ENCODE measurements at regions of chr22 and their contacts with region 1.

Region 1: GRCh38 chr22:35627264-35628041 is 10.3 kb upstream of the MB start:
- DNase-seq: peak; percentile 64
- ATAC-seq: peak; percentile 78
- H3K4me3 ChIP-seq: peak overlapping the region; percentile 59 to 79 (median 59)
- H3K27ac ChIP-seq: no peak overlapping the region
- H3K4me1 ChIP-seq: peaks cover 23% of the 10 kb centered on the region
- H3K27me3 ChIP-seq: 0 out of 5 replicates have a peak, but pooled peaks cover 0 to 3% of the 10 kb centered on the region in 2 experiments
- CTCF ChIP-seq: peak; percentile 89
- EP300 ChIP-seq: no peak
- POLR2A ChIP-seq: peak in 1 of 2 experiments; percentile 47; a peak in 1 of 4 replicates
- RAD21 ChIP-seq: peak; percentile 74

Region 2: GRCh38 chr22:35350539-35351503 is 276.6 kb before region 1 on chr22:
- CTCF ChIA-PET with region 1: interaction called, 7 read pairs
- POLR2A ChIA-PET with region 1: no interaction called
- in situ Hi-C with region 1: no loop called
- intact Hi-C with region 1: loop called (anchors 1 kb)
- DNase-seq: peak; percentile 79
- ATAC-seq: peak; percentile 87
- H3K4me3 ChIP-seq: peak overlapping the region; percentile 56 to 80 (median 57)
- H3K27ac ChIP-seq: peak overlapping the region; percentile 53
- H3K4me1 ChIP-seq: peaks cover 53% of the 10 kb centered on the region
- H3K27me3 ChIP-seq: no peaks in the 10 kb centered on the region; a peak in 1 of 5 replicates
- CTCF ChIP-seq: peak; percentile 99
- EP300 ChIP-seq: no peak
- POLR2A ChIP-seq: peak in 1 of 2 experiments; percentile 50; a peak in 2 of 4 replicates
- RAD21 ChIP-seq: peak; percentile 99

Region 3: GRCh38 chr22:35739076-35739930 is 111.8 kb after region 1 on chr22:
- CTCF ChIA-PET with region 1: interaction called, 5 read pairs
- POLR2A ChIA-PET with region 1: no interaction called
- in situ Hi-C with region 1: loop called (anchors 10 kb)
- intact Hi-C with region 1: loop called (anchors 1 kb)
- DNase-seq: peak; percentile 18
- ATAC-seq: peak; percentile 69
- H3K4me3 ChIP-seq: no peak overlapping the region
- H3K27ac ChIP-seq: no peak overlapping the region
- H3K4me1 ChIP-seq: no peaks in the 10 kb centered on the region
- H3K27me3 ChIP-seq: no peaks in the 10 kb centered on the region
- CTCF ChIP-seq: peak; percentile 40
- EP300 ChIP-seq: no peak
- POLR2A ChIP-seq: no peak
- RAD21 ChIP-seq: no peak

Region 4: DNA sequence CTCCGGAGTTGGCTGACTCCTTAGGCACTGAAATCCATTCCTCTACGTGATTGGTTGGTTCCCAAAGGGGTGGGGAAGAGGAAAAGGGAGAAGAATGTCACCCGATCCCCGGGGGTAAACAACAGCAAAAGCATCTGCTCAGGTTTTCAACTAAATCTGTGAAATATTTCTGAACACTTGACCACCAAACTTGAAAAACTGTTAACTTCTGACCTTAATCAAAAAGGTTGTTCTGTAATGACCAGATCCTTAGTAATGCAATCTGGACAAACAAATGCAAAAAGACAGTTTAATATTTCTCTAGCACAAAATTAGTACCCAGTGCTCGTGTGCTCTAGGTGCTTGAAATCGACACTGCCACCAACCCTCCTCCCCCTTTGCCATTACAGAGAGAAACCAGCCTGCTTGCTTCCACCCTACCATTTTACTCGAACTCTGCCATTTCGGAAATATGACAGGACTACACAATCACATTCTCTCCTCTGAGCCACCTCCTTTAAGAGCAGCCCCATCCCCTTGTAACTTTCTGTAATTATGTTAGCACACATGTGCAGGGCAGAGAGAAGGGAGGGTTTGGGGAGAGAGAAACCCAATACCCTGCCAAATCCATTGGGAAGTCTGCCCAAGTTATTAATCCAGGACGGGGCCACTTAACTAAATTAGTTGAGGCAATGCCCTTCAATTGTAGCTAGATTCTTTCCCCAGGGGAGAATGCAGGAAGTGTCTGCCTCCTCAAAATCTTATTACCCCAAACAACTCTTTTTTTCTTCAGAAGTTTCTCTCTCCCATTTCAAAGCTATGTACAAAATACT is 287.4 kb after region 1 on chr22:
- CTCF ChIA-PET with region 1: no interaction called
- POLR2A ChIA-PET with region 1: interaction called, 3 read pairs
- in situ Hi-C with region 1: loop called (anchors 5 kb)
- intact Hi-C with region 1: loop called (anchors 5 kb)
- DNase-seq: peak; percentile 91
- ATAC-seq: peak; percentile 99
- H3K4me3 ChIP-seq: peak overlapping the region; percentile 57 to 72 (median 62)
- H3K27ac ChIP-seq: peak overlapping the region; percentile 81
- H3K4me1 ChIP-seq: peaks cover 46% of the 10 kb centered on the region
- H3K27me3 ChIP-seq: no peaks in the 10 kb centered on the region
- CTCF ChIP-seq: no peak
- EP300 ChIP-seq: no peak
- POLR2A ChIP-seq: no peak
- RAD21 ChIP-seq: no peak

Region 5: DNA sequence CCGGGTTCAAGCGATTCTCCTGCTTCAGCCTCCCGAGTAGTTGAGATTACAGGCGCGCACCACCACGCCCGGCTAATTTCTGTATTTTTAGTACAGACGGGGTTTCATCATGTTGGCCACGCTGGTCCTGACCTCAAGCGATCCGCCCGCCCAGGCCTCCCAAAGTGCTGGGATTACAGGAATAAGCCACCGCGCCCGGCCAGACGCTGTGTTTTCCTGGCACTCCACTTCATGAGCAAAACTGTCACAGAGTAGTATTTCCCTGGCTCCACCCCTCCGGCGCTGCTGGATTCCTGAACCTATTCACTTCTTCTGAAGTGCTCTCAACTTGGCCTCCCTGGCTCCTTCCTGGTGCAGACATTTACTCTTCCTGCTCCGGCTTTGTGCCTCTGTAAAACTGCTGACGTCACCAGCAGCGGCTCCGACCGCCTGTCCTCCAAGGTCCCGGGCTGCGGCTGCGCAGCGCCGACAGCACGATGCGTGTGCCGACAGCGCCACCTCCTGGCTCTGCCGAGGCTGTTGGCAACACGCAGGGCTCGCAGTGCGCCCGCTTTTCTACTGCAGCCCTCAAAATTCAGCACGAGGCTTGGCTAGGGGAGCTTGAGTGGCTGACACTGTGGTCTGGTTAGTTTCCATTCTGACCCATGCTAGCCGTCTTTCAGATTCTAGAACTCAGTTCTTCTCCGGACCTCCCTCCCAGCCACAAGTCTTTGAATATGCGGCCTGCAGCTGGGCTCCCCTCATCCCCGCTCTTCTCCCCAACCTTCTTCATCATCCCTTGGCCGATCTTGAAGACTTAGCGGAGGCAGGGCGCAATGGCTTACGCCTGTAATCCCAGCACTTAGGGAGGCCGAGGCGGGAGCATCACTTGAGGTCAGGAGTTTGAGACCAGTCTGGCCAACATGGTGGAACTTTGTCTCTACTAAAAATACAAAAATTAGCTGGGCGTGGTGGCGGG is 496.5 kb after region 1 on chr22:
- CTCF ChIA-PET with region 1: interaction called, 7 read pairs
- POLR2A ChIA-PET with region 1: interaction called, 3 read pairs
- in situ Hi-C with region 1: loop called (anchors 5 kb)
- intact Hi-C with region 1: loop called (anchors 5 kb)
- DNase-seq: peak; percentile 93
- ATAC-seq: peak; percentile 89
- H3K4me3 ChIP-seq: peak overlapping the region; percentile 51 to 71 (median 55); a peak in 5 of 6 replicates
- H3K27ac ChIP-seq: peak overlapping the region; percentile 62
- H3K4me1 ChIP-seq: peaks cover 42% of the 10 kb centered on the region
- H3K27me3 ChIP-seq: 0 out of 5 replicates have a peak, but pooled peaks cover 0 to 1% of the 10 kb centered on the region in 2 experiments
- CTCF ChIP-seq: peak; percentile 100
- EP300 ChIP-seq: no peak
- POLR2A ChIP-seq: peak; percentile 51 to 56; a peak in 2 of 4 replicates
- RAD21 ChIP-seq: peak; percentile 99

Measured in HepG2 (cell line).